Activated CD4-positive, alpha-beta memory T cell treated with anti-CD3 and anti-CD28 coated beads for 36 hours (primary cell): ENCODE measurements at regions of chr11 and their contacts with region 1.

Region 1: DNA sequence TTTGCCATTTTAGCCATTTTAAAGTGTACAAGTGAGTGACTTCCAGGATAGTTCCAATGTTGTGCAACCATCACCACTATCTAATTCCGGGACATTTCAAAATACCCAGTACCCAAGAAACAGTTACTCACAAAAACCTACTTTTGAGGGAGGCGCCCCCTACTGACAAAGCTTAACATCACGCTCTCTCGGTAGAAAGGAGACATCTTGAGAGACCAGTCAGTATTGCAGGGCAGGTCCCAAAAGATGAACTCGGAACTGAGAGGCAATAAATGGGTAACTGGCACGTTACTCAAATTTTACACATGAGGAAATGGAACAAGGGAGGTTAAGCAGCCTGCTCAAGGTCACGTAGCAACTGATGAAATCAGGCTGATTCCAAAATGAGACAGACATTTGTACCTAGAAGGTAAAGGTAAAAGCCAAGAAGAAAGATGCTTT is 50.0 kb upstream of the POU2AF1 start:
- DNase-seq: peak; percentile 82
- H3K4me3 Mint-ChIP-seq: no peak overlapping the region
- H3K27ac Mint-ChIP-seq: no peak overlapping the region
- H3K4me1 Mint-ChIP-seq: peaks cover 2% of the 10 kb centered on the region
- H3K27me3 Mint-ChIP-seq: peaks cover 3% of the 10 kb centered on the region

Region 2: DNA sequence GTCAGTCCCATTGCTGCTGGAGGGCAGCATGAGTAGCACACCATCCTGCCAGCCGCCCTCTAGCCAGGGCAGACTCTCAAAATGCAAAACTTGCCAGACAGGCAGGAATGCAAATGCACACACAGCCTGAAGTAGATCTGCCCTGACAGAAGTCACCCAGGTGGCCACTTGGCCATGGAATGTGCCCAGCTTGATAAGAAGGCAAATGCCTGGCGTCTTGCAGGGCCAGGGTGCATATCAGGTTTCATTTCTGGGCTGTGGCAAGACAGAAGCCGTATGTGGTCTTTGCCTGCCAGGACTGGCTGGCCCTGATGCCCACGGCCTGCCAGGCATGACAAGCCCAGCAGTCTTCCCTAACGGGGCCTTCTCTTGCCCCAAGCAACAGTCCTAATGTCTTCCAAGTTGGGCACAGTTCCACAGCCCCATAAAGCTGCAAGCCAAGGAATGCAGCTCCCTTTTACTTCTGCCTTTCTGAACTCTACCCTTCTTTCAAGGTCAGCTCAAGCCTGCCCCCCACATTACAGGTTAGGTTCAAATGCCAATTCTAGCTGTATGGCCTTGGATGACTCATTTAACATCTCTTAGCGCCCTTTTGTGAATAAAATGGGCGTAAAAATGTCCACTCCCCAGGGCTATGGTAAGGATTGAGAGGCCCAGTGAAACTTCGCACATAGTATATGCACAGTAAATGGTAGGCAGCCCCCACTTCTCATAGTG is 101.0 kb before region 1 on chr11:
- CTCF ChIA-PET with region 1: no interaction called
- POLR2A ChIA-PET with region 1: no interaction called
- intact Hi-C with region 1: no loop called
- DNase-seq: no peak
- H3K4me3 Mint-ChIP-seq: no peak overlapping the region
- H3K27ac Mint-ChIP-seq: no peak overlapping the region
- H3K4me1 Mint-ChIP-seq: no peaks in the 10 kb centered on the region
- H3K27me3 Mint-ChIP-seq: peaks cover 1% of the 10 kb centered on the region

Region 3: GRCh38 chr11:111359223-111360149 is 69.6 kb before region 1 on chr11:
- CTCF ChIA-PET with region 1: interaction called, 38 read pairs
- POLR2A ChIA-PET with region 1: no interaction called
- intact Hi-C with region 1: no loop called
- DNase-seq: peak; percentile 22
- H3K4me3 Mint-ChIP-seq: no peak overlapping the region
- H3K27ac Mint-ChIP-seq: no peak overlapping the region
- H3K4me1 Mint-ChIP-seq: peaks cover 4% of the 10 kb centered on the region
- H3K27me3 Mint-ChIP-seq: no peaks in the 10 kb centered on the region

Region 4: GRCh38 chr11:111441443-111441842 is 12.4 kb after region 1 on chr11:
- CTCF ChIA-PET with region 1: interaction called, 38 read pairs
- POLR2A ChIA-PET with region 1: no interaction called
- intact Hi-C with region 1: no loop called
- DNase-seq: peak; percentile 38
- H3K4me3 Mint-ChIP-seq: no peak overlapping the region
- H3K27ac Mint-ChIP-seq: no peak overlapping the region
- H3K4me1 Mint-ChIP-seq: peaks cover 17% of the 10 kb centered on the region
- H3K27me3 Mint-ChIP-seq: no peaks in the 10 kb centered on the region

Region 5: DNA sequence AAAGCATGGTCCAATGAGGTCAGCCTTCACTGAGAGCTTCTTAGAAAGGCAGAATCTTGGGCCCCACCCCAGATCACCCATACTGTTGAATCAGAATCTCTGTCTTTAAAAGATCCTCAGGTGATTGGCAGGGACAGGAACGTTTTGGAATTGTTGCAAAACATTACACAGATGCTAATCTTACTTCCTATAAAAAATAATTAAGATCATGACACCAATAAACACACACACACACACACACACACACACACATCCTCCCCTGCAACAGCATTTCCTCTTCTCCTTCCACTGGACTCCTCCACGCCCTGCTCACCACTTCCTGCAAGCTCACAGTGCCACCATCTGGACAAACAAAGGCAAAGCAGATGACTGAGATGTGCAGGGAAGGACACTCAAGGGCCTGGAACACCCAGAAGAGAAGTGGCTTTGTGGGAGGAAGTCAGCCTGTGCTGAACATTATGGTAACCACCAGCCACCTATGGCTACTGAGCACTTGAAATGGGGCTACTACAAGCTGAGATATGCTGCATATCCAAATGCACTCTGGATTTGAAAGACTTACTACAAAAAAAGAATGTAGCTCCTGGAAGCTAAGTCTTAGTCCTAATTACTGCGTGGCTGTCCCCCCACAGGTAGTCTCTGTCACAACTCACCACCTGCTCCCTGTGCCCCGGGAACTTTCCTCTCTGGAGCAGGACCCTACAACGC is 17.5 kb after region 1 on chr11:
- CTCF ChIA-PET with region 1: interaction called, 38 read pairs
- POLR2A ChIA-PET with region 1: no interaction called
- intact Hi-C with region 1: no loop called
- DNase-seq: peak; percentile 84
- H3K4me3 Mint-ChIP-seq: no peak overlapping the region
- H3K27ac Mint-ChIP-seq: peak overlapping the region; percentile 56
- H3K4me1 Mint-ChIP-seq: peaks cover 14% of the 10 kb centered on the region
- H3K27me3 Mint-ChIP-seq: no peaks in the 10 kb centered on the region

Region 6: GRCh38 chr11:111808063-111808588 is 379.0 kb after region 1 on chr11:
- CTCF ChIA-PET with region 1: no interaction called
- POLR2A ChIA-PET with region 1: no interaction called
- intact Hi-C with region 1: no loop called
- DNase-seq: no peak
- H3K4me3 Mint-ChIP-seq: no peak overlapping the region
- H3K27ac Mint-ChIP-seq: no peak overlapping the region
- H3K4me1 Mint-ChIP-seq: no peaks in the 10 kb centered on the region
- H3K27me3 Mint-ChIP-seq: no peaks in the 10 kb centered on the region

Region 7: DNA sequence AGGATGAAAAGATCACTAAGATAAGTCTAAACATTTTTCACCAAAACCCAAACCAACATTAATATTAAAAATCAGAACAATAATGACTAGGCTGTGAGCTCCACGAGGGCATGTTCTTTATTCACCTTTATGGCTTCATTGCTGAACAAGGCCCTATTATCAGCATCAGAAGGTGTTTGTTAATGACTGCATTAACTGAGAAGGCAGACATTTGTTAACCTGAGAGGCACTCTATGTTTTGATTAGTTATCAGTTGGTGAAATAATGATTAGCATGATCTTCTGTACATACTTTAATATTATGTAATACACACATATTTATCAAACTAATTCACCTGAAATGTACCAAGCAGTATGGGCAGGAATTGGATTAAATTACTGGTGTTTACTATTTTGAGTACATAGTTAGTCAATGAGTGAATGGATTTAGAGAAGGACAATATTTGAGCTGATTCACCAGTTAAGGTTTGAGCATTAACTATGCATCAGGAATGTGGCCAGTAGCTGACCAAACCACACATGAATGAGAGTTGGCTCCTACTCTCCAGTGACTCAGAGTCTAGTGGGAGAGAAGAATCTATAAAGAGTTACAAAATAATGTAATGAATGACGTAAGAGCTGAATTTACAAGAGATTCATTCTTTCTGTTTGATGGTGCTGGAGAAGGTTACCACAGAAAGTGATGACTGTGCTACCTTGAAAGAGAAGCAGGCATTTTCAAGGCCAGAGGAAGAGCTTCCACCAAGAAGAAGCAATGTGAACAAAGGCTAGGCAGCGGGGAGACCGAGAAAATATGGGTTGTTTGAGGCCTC is 728.1 kb after region 1 on chr11:
- CTCF ChIA-PET with region 1: no interaction called
- POLR2A ChIA-PET with region 1: no interaction called
- intact Hi-C with region 1: no loop called
- DNase-seq: peak; percentile 15
- H3K4me3 Mint-ChIP-seq: no peak overlapping the region
- H3K27ac Mint-ChIP-seq: no peak overlapping the region
- H3K4me1 Mint-ChIP-seq: peaks cover 5% of the 10 kb centered on the region
- H3K27me3 Mint-ChIP-seq: peaks cover 3% of the 10 kb centered on the region